GM12878 (cell line): ENCODE measurements at regions of chr2 and their contacts with region 1.

Region 1: DNA sequence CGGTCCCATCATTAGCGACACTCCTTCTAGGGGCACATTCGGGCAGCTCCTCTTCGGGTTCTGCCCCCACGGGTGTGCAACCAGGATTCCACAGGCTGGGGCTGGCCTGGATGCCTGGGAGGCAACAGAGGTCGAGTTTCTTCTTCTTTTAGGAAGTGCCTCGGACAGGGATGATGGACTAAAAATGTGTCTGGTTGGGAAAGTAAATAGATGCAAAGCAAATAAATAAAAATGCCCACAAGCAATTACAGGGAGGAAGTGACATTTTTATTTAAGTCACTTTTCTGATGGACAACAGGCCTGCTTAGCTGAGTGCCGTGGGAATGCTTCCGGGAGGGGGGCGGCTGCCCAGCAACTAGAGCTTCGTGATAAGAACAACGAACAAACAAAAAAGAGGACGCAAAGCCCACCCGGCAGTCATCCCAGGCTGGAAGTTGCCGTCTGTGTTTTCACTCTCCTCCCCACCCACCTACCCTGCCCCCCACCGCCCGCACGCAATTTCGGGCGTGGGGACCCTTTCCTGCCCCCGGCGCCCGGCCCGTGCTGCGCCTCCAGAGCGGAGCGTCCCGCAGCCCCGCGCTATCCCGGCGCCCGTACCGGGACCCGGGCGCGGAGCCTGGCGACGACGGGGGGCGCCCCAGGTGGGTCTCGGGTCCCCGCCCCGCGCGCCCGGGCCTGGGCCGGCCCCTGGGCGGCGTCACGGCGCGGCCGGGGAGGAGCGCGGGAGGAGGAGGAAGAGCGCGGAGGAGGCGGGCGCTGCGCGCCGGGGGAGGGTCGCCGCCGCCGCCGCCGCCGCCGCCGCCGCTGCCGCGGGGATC is 412 bp upstream of the NCK2 start:
- DNase-seq: no peak
- ATAC-seq: peak; percentile 69
- H3K4me3 ChIP-seq: peak overlapping the region; percentile 59
- H3K27ac ChIP-seq: no peak overlapping the region
- H3K4me1 ChIP-seq: peaks cover 27% of the 10 kb centered on the region
- H3K27me3 ChIP-seq: no peaks in the 10 kb centered on the region; a peak in 1 of 4 replicates
- CTCF ChIP-seq: no peak
- EP300 ChIP-seq: no peak
- POLR2A ChIP-seq: peak; percentile 44; the same call in 1 of the 2 replicates
- RAD21 ChIP-seq: no peak

Region 2: DNA sequence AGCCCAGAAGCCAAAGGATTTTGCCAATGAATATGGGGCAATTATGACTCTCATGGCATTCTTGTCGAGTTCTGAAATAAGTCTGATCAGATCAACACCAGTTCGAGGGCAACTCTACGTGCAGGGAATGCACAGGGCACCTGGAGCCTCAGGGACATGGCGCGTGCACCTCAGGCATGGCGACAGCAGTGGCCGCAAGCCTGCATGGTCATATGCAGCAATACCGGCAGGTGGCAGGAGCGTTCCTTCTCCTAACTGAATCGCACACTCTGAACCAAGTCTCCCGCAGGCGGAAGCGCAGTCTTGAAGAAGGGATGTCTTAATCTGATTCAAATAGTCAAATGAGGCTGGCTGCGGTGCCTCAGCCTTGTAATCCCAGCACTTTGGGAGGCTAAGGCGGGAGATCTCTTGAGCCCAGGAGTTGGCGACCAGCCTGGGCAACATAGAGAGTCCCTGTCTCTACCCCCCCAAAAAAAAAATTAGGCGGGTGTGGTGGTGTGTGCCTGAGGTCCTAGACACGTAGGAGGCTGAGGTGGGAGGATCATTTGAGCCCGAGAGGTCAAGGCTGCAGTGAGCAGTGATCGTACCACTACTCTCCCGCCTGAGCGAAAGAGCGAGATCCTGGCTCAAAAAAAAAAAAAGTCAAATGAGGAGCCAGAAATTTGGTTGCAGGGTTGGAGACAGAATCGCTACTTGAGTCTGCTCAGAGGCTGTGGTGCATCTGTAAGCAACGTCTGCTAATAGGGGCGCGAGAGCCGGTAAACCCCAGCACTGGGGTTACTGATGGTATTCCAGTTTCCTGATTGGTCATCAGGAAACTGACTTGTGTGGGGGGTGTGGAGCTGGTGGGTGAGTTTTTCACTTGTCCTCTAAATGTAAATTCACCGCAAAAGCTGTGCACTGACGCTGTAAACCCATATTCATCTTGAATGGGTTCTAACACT is 374.3 kb before region 1 on chr2:
- CTCF ChIA-PET with region 1: interaction called, 3 read pairs
- POLR2A ChIA-PET with region 1: no interaction called
- RAD21 ChIA-PET with region 1: no interaction called
- SMC1A ChIA-PET with region 1: no interaction called
- in situ Hi-C with region 1: no loop called
- intact Hi-C with region 1: loop called (anchors 10 kb)
- DNase-seq: peak; percentile 55
- ATAC-seq: peak; percentile 91
- H3K4me3 ChIP-seq: no peak overlapping the region
- H3K27ac ChIP-seq: no peak overlapping the region
- H3K4me1 ChIP-seq: peaks cover 13% of the 10 kb centered on the region
- H3K27me3 ChIP-seq: no peaks in the 10 kb centered on the region
- CTCF ChIP-seq: peak; percentile 95 to 96 (median 96)
- EP300 ChIP-seq: no peak
- POLR2A ChIP-seq: no peak
- RAD21 ChIP-seq: peak; percentile 90

Region 3: DNA sequence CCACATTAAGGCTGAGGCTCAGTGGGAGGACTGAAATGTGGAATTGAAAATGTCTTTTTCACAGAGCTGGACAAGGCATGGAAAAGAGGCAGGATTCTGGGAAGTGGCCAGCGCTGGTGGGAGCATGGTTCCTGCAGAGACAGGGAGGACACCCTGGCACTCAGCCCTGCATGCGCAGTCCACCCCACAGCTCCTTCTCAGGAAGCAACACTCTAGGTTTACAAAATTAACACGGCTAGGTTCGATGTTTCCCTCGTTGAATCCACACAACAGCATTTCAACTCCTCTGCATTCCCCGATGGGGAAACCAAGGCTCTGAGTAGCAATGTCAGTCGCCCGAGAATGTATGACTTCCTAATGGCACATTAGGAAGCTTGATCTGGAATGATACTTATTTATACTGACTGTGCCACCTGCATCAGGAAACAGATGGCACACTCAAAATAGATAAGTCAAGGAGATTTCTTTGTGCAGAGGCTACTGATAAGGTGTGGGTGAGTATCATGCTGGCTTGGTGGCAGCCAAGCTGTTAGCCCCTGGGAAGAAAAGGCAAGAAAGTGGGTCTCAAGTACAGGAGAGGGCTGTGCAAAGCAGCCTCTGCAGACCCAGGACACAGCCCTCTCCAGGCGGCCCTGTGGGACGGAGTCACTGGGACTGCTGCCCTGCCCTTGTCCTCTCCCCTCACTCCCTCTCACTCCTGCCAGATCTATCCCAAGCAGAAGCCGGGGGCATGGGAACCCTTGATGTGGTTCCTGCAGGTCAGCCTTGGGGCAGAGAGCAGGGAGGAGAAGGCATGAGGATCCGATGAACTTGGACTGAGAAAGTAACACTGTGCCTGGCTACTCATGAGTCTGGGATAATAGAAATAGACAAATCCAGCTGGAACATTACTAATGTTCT is 187.0 kb before region 1 on chr2:
- CTCF ChIA-PET with region 1: no interaction called
- POLR2A ChIA-PET with region 1: no interaction called
- RAD21 ChIA-PET with region 1: no interaction called
- SMC1A ChIA-PET with region 1: no interaction called
- in situ Hi-C with region 1: no loop called
- intact Hi-C with region 1: no loop called
- DNase-seq: no peak
- ATAC-seq: no peak
- H3K4me3 ChIP-seq: no peak overlapping the region
- H3K27ac ChIP-seq: no peak overlapping the region
- H3K4me1 ChIP-seq: no peaks in the 10 kb centered on the region
- H3K27me3 ChIP-seq: peaks cover 0 to 2% of the 10 kb centered on the region in 2 experiments; a peak in 2 of 4 replicates
- CTCF ChIP-seq: no peak
- EP300 ChIP-seq: no peak
- POLR2A ChIP-seq: no peak
- RAD21 ChIP-seq: no peak

Region 4: DNA sequence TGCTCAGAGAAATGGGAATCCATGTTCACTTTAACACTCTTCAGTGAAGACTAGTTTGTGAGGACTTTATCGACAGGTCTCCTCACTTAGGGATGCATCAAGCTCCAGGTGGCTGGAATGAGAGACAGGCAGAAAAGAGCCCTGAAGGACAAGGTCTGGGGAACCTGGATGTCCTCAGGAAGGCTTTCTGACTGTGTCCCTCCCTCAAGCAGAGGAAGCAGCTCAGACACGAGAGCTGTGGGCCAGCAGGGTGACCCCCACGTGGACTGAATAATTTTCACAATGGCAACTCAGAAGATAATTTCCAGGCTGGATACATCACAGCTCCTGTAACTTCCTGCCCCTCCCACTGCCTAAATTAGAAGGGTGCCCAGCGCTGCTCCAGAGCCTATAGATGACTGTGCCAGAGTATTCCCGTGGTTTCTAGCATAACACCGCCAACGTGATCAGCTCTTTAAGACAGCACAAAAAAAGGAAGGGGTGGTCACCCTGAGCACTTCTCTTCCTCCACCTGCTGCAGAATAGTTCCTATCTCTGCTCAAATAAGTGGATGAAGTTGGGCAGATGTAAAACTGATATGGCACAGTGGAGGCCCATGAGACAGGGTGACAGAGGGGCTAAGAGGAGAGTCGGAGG is 25.3 kb before region 1 on chr2:
- CTCF ChIA-PET with region 1: no interaction called
- POLR2A ChIA-PET with region 1: no interaction called
- RAD21 ChIA-PET with region 1: no interaction called
- SMC1A ChIA-PET with region 1: no interaction called
- in situ Hi-C with region 1: no loop called
- intact Hi-C with region 1: no loop called
- DNase-seq: no peak
- ATAC-seq: no peak
- H3K4me3 ChIP-seq: no peak overlapping the region
- H3K27ac ChIP-seq: no peak overlapping the region
- H3K4me1 ChIP-seq: no peaks in the 10 kb centered on the region
- H3K27me3 ChIP-seq: peaks cover 0 to 3% of the 10 kb centered on the region in 2 experiments; a peak in 3 of 4 replicates
- CTCF ChIP-seq: no peak
- EP300 ChIP-seq: no peak
- POLR2A ChIP-seq: no peak
- RAD21 ChIP-seq: no peak

Region 5: GRCh38 chr2:105797298-105797819 is 53.1 kb after region 1 on chr2:
- CTCF ChIA-PET with region 1: interaction called, 29 read pairs
- POLR2A ChIA-PET with region 1: interaction called, 9 read pairs
- RAD21 ChIA-PET with region 1: interaction called, 40 read pairs
- SMC1A ChIA-PET with region 1: interaction called, 70 read pairs
- in situ Hi-C with region 1: no loop called
- intact Hi-C with region 1: loop called (anchors 2 kb)
- DNase-seq: peak; percentile 65
- ATAC-seq: peak; percentile 66
- H3K4me3 ChIP-seq: peak overlapping the region; percentile 31; the same call in 1 of the 2 replicates
- H3K27ac ChIP-seq: peak overlapping the region; percentile 96
- H3K4me1 ChIP-seq: peaks cover 66% of the 10 kb centered on the region
- H3K27me3 ChIP-seq: no peaks in the 10 kb centered on the region
- CTCF ChIP-seq: no peak
- EP300 ChIP-seq: no peak; a peak in 1 of 4 replicates
- POLR2A ChIP-seq: peak; percentile 63; the same call in 1 of the 2 replicates
- RAD21 ChIP-seq: no peak

Region 6: GRCh38 chr2:105822186-105822585 is 77.9 kb after region 1 on chr2:
- CTCF ChIA-PET with region 1: interaction called, 7 read pairs
- POLR2A ChIA-PET with region 1: interaction called, 3 read pairs
- RAD21 ChIA-PET with region 1: interaction called, 5 read pairs
- SMC1A ChIA-PET with region 1: interaction called, 19 read pairs
- in situ Hi-C with region 1: no loop called
- intact Hi-C with region 1: no loop called
- DNase-seq: no peak
- ATAC-seq: peak; percentile 99
- H3K4me3 ChIP-seq: no peak overlapping the region; the same call in 1 of the 2 replicates
- H3K27ac ChIP-seq: peak overlapping the region; percentile 73
- H3K4me1 ChIP-seq: peaks cover 13% of the 10 kb centered on the region; the same call in 1 of the 2 replicates
- H3K27me3 ChIP-seq: no peaks in the 10 kb centered on the region
- CTCF ChIP-seq: no peak
- EP300 ChIP-seq: no peak
- POLR2A ChIP-seq: no peak
- RAD21 ChIP-seq: peak; percentile 14; the same call in 1 of the 2 replicates

Region 7: GRCh38 chr2:105873721-105874120 is 129.4 kb after region 1 on chr2:
- CTCF ChIA-PET with region 1: interaction called, 3 read pairs
- POLR2A ChIA-PET with region 1: interaction called, 4 read pairs
- RAD21 ChIA-PET with region 1: interaction called, 16 read pairs
- SMC1A ChIA-PET with region 1: interaction called, 3 read pairs
- in situ Hi-C with region 1: no loop called
- intact Hi-C with region 1: loop called (anchors 5 kb)
- DNase-seq: peak; percentile 71
- ATAC-seq: peak; percentile 97
- H3K4me3 ChIP-seq: no peak overlapping the region
- H3K27ac ChIP-seq: peak overlapping the region; percentile 63
- H3K4me1 ChIP-seq: peaks cover 27% of the 10 kb centered on the region
- H3K27me3 ChIP-seq: no peaks in the 10 kb centered on the region
- CTCF ChIP-seq: peak in 1 of 3 experiments; percentile 5; a peak in 1 of 6 replicates
- EP300 ChIP-seq: peak; percentile 70 to 92; a peak in 3 of 4 replicates
- POLR2A ChIP-seq: peak; percentile 52; the same call in 1 of the 2 replicates
- RAD21 ChIP-seq: peak; percentile 38; the same call in 1 of the 2 replicates

Region 8: DNA sequence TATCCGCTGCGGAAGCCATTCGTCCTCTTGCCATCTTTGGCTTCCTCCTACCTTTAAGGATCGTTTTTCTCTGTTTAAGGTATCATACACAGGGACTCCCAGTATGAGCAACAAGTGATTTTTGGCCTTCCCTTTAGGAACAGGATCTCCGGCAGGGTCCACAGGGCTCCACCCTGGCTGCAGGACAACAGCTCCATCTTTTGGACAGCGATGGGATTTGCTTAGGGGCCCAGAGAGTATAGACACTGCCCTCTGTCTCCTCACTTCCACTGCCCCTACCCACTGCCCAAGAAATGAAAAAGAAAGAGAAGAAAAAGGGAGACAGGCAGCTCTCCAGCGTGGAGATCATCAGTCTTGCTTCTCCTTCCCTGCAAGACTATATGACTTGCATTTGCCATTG is 225.3 kb after region 1 on chr2:
- CTCF ChIA-PET with region 1: interaction called, 3 read pairs
- POLR2A ChIA-PET with region 1: no interaction called
- RAD21 ChIA-PET with region 1: no interaction called
- SMC1A ChIA-PET with region 1: interaction called, 4 read pairs
- in situ Hi-C with region 1: no loop called
- intact Hi-C with region 1: loop called (anchors 5 kb)
- DNase-seq: no peak
- ATAC-seq: peak; percentile 70
- H3K4me3 ChIP-seq: no peak overlapping the region
- H3K27ac ChIP-seq: no peak overlapping the region
- H3K4me1 ChIP-seq: no peaks in the 10 kb centered on the region
- H3K27me3 ChIP-seq: no peaks in the 10 kb centered on the region; a peak in 1 of 4 replicates
- CTCF ChIP-seq: peak; percentile 26 to 34 (median 29); a peak in 4 of 6 replicates
- EP300 ChIP-seq: no peak
- POLR2A ChIP-seq: no peak
- RAD21 ChIP-seq: peak; percentile 58

Region 9: DNA sequence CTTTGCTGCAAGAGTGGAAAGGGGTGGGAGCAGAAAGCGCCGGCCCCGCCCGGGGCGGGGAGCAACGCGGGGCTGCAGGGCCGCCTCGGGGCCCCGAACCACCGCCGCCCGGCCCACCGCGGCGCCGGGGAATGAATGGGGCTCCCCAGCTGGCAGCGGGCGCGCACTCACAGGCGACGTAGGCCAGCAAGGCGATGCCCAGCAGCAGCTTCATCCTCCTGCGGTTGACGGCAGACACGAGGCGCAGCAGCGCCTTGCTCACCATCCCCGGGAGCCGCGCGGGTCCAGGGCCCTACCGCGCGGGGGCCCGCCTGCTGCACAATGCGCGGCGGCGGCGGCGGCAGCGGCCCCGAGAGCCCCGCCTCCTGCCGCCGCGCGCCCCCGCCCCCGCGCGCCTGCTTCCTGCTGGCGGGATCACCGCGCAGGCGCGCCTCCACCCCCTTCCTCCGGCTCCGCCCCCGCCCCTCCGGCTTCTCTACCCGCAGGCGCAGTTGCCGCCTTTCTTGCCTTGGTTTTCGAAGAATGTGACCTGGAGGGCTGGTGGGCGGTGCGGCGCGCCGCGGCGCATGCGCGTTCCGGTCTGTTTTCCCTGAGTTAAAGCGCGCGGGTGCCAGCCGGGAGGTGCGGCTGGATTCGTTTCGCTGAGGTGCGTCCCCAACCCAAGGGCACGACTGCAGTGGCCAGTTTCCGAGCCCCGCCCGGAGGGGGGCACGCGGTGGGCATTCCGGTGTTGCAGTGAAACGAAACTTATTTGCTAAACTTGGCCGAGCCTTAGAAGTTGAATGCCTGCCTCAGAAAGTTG is 449.9 kb after region 1 on chr2 and contains the start of gene UXS1:
- CTCF ChIA-PET with region 1: no interaction called
- POLR2A ChIA-PET with region 1: no interaction called
- RAD21 ChIA-PET with region 1: no interaction called
- SMC1A ChIA-PET with region 1: no interaction called
- in situ Hi-C with region 1: no loop called
- intact Hi-C with region 1: loop called (anchors 5 kb)
- DNase-seq: peak; percentile 78
- ATAC-seq: peak; percentile 78
- H3K4me3 ChIP-seq: peak within 1 kb of the TSS; percentile 92
- H3K27ac ChIP-seq: peak within 1 kb of the TSS; percentile 69
- H3K4me1 ChIP-seq: peaks cover 9% of the 10 kb centered on the region
- H3K27me3 ChIP-seq: no peaks in the 10 kb centered on the region
- CTCF ChIP-seq: 0 out of 6 replicates have a peak, but pooled peaks of 1 of the 3 experiments have one; percentile 7
- EP300 ChIP-seq: no peak; a peak in 1 of 4 replicates
- POLR2A ChIP-seq: peak; percentile 92
- RAD21 ChIP-seq: no peak
- polyA plus RNA-seq, gene UXS1: 6.0 to 10.5 TPM